ENCODE measurements at regions of chr12 and their contacts with region 1.

Region 1: DNA sequence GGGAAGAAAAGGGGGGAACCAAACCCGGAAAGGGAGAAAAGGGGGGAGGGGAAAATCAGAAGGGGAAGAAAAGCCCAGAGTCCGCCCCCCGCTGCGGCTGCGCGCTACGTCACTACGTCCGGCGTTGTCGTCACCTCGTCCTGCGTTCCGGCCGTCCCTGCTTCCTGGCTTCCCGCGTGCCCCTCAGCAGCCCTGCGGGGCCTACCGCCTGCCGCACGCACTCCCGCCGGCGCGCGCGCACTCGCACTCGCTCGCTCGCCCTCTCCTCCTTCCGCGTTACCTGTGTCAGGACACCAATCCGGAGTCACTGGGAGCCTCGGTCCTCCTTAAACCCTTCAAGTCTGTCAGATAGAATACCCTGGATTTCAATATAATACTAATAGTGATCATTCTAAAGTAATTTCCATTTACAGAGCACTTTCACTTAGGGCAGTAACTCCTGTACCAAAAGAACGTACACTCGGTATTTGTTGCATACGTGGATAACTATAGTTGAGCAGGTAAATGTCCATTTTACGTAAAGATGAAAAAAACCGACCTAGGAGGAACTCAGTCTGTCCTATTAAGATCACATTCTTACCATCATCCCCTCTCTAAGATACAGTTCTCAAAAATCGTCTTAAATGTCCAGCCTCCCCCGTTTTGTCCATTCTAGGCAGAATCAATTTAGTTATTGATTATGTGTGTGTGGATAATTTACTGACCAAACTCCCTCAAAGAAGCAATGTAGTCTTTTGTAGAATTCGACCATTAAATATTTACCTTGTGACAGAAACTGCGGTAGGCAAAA is at the start of gene R3HDM2:
- DNase-seq: peak; percentile 93
- H3K4me3 ChIP-seq: peak within 1 kb of the TSS; percentile 58 to 62 (median 61)
- H3K27ac ChIP-seq: peak within 1 kb of the TSS; percentile 78
- H3K4me1 ChIP-seq: peaks cover 3% of the 10 kb centered on the region
- H3K27me3 ChIP-seq: no peaks in the 10 kb centered on the region
- CTCF ChIP-seq: no peak
- total RNA-seq, gene R3HDM2: 16.3 to 44.7 TPM

Region 2: DNA sequence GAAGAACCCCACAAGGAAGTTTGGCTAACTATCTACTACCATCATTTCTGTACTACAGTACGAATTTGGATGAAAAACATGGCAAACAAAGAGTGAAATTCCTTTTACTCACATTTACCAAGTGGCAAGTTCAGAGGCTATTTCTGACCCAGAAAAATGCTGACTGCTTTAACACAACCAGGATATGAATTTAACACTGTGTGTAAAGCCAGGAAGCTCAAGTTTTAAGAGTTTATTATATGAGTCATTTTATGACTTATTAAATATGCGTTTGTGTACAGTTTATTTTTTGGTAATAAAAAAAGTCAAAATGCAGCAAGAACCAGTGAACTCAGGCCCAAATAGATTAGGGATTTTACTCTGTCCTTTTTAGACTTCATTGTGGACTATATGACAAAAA is 121.7 kb before region 1 on chr12:
- CTCF ChIA-PET with region 1: no interaction called
- dilution Hi-C with region 1: no loop called
- in situ Hi-C with region 1: no loop called
- intact Hi-C with region 1: loop called (anchors 5 kb)
- DNase-seq: peak; percentile 13
- H3K4me3 ChIP-seq: no peak overlapping the region
- H3K27ac ChIP-seq: no peak overlapping the region
- H3K4me1 ChIP-seq: peaks cover 8% of the 10 kb centered on the region
- H3K27me3 ChIP-seq: no peaks in the 10 kb centered on the region
- CTCF ChIP-seq: no peak

Region 3: GRCh38 chr12:57389033-57389432 is 42.1 kb before region 1 on chr12:
- CTCF ChIA-PET with region 1: interaction called, 17 read pairs
- dilution Hi-C with region 1: no loop called
- in situ Hi-C with region 1: no loop called
- intact Hi-C with region 1: loop called (anchors 2 kb)
- DNase-seq: peak; percentile 83
- H3K4me3 ChIP-seq: no peak overlapping the region
- H3K27ac ChIP-seq: peak overlapping the region; percentile 47
- H3K4me1 ChIP-seq: peaks cover 22% of the 10 kb centered on the region
- H3K27me3 ChIP-seq: no peaks in the 10 kb centered on the region
- CTCF ChIP-seq: no peak